CD4-positive, alpha-beta memory T cell (primary cell): ENCODE measurements at regions of chr5 and their contacts with region 1.

Region 1: GRCh38 chr5:111278845-111279504 is 54.8 kb downstream of the CAMK4 start:
- DNase-seq: peak; percentile 77 to 84 (median 82)
- H3K4me3 ChIP-seq: no peak overlapping the region
- H3K4me3 Mint-ChIP-seq: peak overlapping the region in 3 of 8 donors; percentile 27 to 75 (median 63)
- H3K27ac ChIP-seq: no peak overlapping the region
- H3K27ac Mint-ChIP-seq: peak overlapping the region in 6 of 7 donors; percentile 53 to 94 (median 82)
- H3K4me1 ChIP-seq: peaks cover 57% of the 10 kb centered on the region
- H3K4me1 Mint-ChIP-seq: peaks cover 52 to 79% (median 64%) of the 10 kb centered on the region in 4 donors
- H3K27me3 ChIP-seq: no peaks in the 10 kb centered on the region
- H3K27me3 Mint-ChIP-seq: no peaks in the 10 kb centered on the region

Region 2: GRCh38 chr5:111158105-111158744 is 120.8 kb before region 1 on chr5:
- CTCF ChIA-PET with region 1: interaction called, 282 read pairs
- POLR2A ChIA-PET with region 1: interaction called, 11 read pairs
- intact Hi-C with region 1: loop called (anchors 1 kb)
- DNase-seq: peak; percentile 66 to 79 (median 72)
- H3K4me3 ChIP-seq: no peak overlapping the region
- H3K4me3 Mint-ChIP-seq: peak overlapping the region in 1 of 8 donors; percentile 15
- H3K27ac ChIP-seq: no peak overlapping the region
- H3K27ac Mint-ChIP-seq: no peak overlapping the region
- H3K4me1 ChIP-seq: no peaks in the 10 kb centered on the region
- H3K4me1 Mint-ChIP-seq: peaks cover 0 to 6% (median 3%) of the 10 kb centered on the region in 4 donors
- H3K27me3 ChIP-seq: no peaks in the 10 kb centered on the region
- H3K27me3 Mint-ChIP-seq: peaks cover 4 to 7% of the 10 kb centered on the region in 2 donors

Region 3: DNA sequence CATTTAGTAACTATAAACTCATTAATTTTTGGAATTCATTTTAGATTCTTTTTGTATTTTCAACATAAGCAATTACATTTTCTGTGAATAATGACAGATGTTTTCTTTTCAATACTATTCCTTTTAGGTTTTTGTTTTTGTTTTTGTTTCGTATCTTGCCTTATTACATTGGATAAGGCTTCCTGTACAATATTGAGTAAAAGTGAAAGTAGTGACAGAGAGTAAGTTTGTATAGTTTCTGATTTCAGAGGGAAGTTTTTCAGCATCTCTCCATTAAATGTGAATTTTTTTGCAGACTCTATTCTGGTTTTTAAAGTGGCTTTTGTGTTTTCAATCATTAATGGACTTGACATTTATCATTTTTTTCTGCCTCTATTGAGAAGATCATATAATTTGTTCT is 67.6 kb before region 1 on chr5:
- CTCF ChIA-PET with region 1: interaction called, 14 read pairs
- POLR2A ChIA-PET with region 1: interaction called, 3 read pairs
- intact Hi-C with region 1: no loop called
- DNase-seq: no peak
- H3K4me3 ChIP-seq: no peak overlapping the region
- H3K4me3 Mint-ChIP-seq: peak overlapping the region in 7 of 8 donors; percentile 17 to 59 (median 35)
- H3K27ac ChIP-seq: no peak overlapping the region
- H3K27ac Mint-ChIP-seq: no peak overlapping the region
- H3K4me1 ChIP-seq: peaks cover 18% of the 10 kb centered on the region
- H3K4me1 Mint-ChIP-seq: peaks cover 5 to 15% (median 5%) of the 10 kb centered on the region in 4 donors
- H3K27me3 ChIP-seq: no peaks in the 10 kb centered on the region
- H3K27me3 Mint-ChIP-seq: no peaks in the 10 kb centered on the region

Region 4: DNA sequence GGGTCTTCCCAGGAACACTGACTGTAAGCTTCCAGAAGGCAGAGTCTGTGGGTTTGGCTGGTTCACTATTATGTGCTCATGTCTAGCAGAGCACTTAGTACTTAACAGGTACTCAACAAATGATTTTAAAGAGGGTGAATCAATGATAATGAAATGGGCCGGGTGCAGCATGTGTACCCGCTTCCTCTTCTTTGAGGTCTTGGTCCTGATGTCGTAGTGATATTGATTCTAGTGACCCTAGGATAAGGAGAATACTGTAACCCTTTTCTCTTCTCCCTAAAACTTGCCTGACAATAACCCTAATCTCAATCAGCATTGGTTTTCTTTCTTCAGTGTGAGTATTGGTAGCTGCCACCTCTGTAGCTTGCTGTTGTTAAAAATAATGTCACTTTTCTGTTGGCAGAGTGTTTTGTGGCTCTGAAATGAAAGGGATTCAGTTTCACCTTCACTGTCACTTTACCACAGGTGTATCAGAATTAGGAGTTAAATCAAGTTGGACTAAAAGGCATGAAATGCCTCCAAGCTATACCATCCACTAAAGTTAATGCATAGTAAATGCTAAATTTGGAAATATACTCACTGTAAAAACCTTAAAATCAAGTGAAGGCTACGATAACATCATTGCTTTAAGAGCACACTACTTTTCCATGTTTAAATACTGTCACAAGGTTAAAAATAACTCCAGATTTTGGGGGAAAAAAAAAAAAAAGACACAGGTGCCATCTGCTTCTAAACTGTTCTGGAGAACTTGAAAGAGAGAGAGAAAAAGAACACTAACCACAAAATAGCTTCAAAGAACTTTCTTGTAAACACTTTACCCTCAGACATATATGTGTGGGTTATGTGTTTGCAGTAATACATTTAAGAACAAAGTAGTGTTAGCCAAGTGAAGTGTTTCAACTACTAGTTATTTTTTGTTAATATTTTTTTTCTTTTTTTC is 48.8 kb before region 1 on chr5:
- CTCF ChIA-PET with region 1: interaction called, 127 read pairs
- POLR2A ChIA-PET with region 1: interaction called, 43 read pairs
- intact Hi-C with region 1: no loop called
- DNase-seq: peak in 4 of 5 donors; percentile 69 to 80 (median 74)
- H3K4me3 ChIP-seq: peak overlapping the region in 1 of 2 donors; percentile 25
- H3K4me3 Mint-ChIP-seq: peak overlapping the region; percentile 77 to 94 (median 84)
- H3K27ac ChIP-seq: peak overlapping the region; percentile 82
- H3K27ac Mint-ChIP-seq: peak overlapping the region; percentile 83 to 98 (median 95)
- H3K4me1 ChIP-seq: peaks cover 84% of the 10 kb centered on the region
- H3K4me1 Mint-ChIP-seq: peaks cover 59 to 94% (median 74%) of the 10 kb centered on the region in 4 donors
- H3K27me3 ChIP-seq: no peaks in the 10 kb centered on the region
- H3K27me3 Mint-ChIP-seq: no peaks in the 10 kb centered on the region

Region 5: GRCh38 chr5:111254613-111255012 is 24.4 kb before region 1 on chr5:
- CTCF ChIA-PET with region 1: interaction called, 17 read pairs
- POLR2A ChIA-PET with region 1: interaction called, 4 read pairs
- intact Hi-C with region 1: no loop called
- DNase-seq: peak; percentile 47 to 94 (median 58)
- H3K4me3 ChIP-seq: no peak overlapping the region
- H3K4me3 Mint-ChIP-seq: peak overlapping the region in 7 of 8 donors; percentile 71 to 84 (median 77)
- H3K27ac ChIP-seq: peak overlapping the region; percentile 78
- H3K27ac Mint-ChIP-seq: peak overlapping the region; percentile 82 to 93 (median 88)
- H3K4me1 ChIP-seq: peaks cover 74% of the 10 kb centered on the region
- H3K4me1 Mint-ChIP-seq: peaks cover 61 to 71% (median 70%) of the 10 kb centered on the region in 4 donors
- H3K27me3 ChIP-seq: no peaks in the 10 kb centered on the region
- H3K27me3 Mint-ChIP-seq: no peaks in the 10 kb centered on the region

Region 6: GRCh38 chr5:111432883-111433536 is 154.0 kb after region 1 on chr5:
- CTCF ChIA-PET with region 1: no interaction called
- POLR2A ChIA-PET with region 1: no interaction called
- intact Hi-C with region 1: no loop called
- DNase-seq: no peak
- H3K4me3 ChIP-seq: no peak overlapping the region
- H3K4me3 Mint-ChIP-seq: no peak overlapping the region
- H3K27ac ChIP-seq: no peak overlapping the region
- H3K27ac Mint-ChIP-seq: peak overlapping the region in 3 of 7 donors; percentile 31 to 54 (median 50)
- H3K4me1 ChIP-seq: peaks cover 5% of the 10 kb centered on the region
- H3K4me1 Mint-ChIP-seq: peaks cover 26 to 45% (median 41%) of the 10 kb centered on the region in 4 donors
- H3K27me3 ChIP-seq: no peaks in the 10 kb centered on the region
- H3K27me3 Mint-ChIP-seq: no peaks in the 10 kb centered on the region

Region 7: DNA sequence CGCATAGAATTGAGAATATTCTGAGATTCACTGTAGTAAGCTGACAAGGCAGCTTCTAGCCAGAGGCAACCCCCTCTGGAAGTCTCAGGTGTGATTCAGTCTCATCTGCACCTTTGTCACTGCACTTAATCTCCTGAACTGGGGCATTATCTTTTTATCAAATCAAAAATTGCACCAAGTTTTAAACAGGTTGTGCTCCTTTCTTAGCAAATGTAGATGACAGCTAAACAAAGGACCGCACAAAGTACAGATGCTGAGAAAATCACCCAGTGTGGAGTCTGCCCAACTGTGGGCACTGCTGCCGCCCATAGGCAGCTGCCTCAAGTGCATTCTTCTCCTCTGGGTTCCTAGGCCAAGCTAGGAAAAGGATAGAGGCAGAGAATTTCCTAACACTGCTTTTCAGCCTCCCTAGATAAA is 182.3 kb after region 1 on chr5:
- CTCF ChIA-PET with region 1: no interaction called
- POLR2A ChIA-PET with region 1: no interaction called
- intact Hi-C with region 1: no loop called
- DNase-seq: no peak
- H3K4me3 ChIP-seq: no peak overlapping the region
- H3K4me3 Mint-ChIP-seq: no peak overlapping the region
- H3K27ac ChIP-seq: no peak overlapping the region
- H3K27ac Mint-ChIP-seq: no peak overlapping the region
- H3K4me1 ChIP-seq: no peaks in the 10 kb centered on the region
- H3K4me1 Mint-ChIP-seq: peaks cover 0 to 18% (median 8%) of the 10 kb centered on the region in 4 donors
- H3K27me3 ChIP-seq: no peaks in the 10 kb centered on the region
- H3K27me3 Mint-ChIP-seq: no peaks in the 10 kb centered on the region

Region 8: GRCh38 chr5:112146323-112147226 is 867.6 kb after region 1 on chr5:
- CTCF ChIA-PET with region 1: no interaction called
- POLR2A ChIA-PET with region 1: no interaction called
- intact Hi-C with region 1: loop called (anchors 2 kb)
- DNase-seq: peak; percentile 57 to 66 (median 58)
- H3K4me3 ChIP-seq: no peak overlapping the region
- H3K4me3 Mint-ChIP-seq: no peak overlapping the region
- H3K27ac ChIP-seq: no peak overlapping the region
- H3K27ac Mint-ChIP-seq: no peak overlapping the region
- H3K4me1 ChIP-seq: no peaks in the 10 kb centered on the region
- H3K4me1 Mint-ChIP-seq: no peaks in the 10 kb centered on the region
- H3K27me3 ChIP-seq: no peaks in the 10 kb centered on the region
- H3K27me3 Mint-ChIP-seq: peaks cover 12 to 20% of the 10 kb centered on the region in 2 donors